ENCODE measurements at regions of chr3 and their contacts with region 1.

Region 1: DNA sequence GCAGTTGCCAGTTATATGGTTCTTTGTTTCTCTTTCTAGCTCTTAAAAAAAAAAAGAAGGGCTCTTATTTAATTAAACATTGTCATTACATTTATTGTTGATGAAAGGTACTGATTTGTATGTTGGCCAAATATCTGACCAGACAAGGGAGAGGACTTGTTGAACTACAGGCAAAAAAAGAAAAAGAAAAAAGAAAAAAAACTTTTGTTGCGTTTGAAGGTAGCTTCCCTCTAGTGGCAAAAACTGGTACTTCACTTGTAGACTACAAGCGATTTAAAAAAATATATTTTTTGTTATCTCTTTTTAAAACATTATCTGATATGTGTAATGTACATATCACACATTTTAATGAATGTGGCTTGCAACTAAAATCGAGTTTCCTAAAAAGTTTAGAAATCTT is 280.6 kb downstream of the ROBO2 start:
- DNase-seq: peak; percentile 33
- H3K4me3 ChIP-seq: no peak overlapping the region
- H3K27ac ChIP-seq: no peak overlapping the region
- H3K27me3 ChIP-seq: no peaks in the 10 kb centered on the region
- CTCF ChIP-seq: peak; percentile 80

Region 2: DNA sequence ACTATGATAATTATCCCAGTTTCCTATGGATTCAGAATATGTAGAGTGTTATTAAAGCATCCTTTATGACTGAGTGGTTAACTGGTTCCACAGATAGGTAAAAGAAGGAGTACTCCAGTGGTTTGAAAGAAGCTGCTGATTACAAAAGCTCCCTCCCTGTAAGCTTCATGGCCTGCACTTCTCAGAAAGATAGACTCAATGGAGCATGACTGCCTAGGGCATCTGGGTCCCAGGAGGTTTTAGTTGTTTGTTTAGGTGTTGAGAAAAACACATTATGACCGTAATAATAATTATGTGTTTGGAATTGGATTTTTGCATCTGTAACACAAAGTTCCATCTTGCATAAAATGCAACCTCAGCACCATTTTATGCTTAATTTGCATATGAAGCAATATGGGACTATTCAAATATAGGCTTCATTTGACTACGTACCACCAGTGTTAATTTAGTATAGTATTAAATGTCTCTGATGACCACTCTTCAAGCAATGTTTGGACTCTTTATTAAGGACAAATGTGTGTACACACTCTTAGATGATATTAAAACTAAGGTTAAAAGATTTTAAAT is 159.5 kb before region 1 on chr3:
- CTCF ChIA-PET with region 1: no interaction called
- POLR2A ChIA-PET with region 1: no interaction called
- DNase-seq: no peak
- H3K4me3 ChIP-seq: no peak overlapping the region
- H3K27ac ChIP-seq: no peak overlapping the region
- H3K27me3 ChIP-seq: no peaks in the 10 kb centered on the region
- CTCF ChIP-seq: no peak

Region 3: GRCh38 chr3:77254967-77255831 is 65.3 kb before region 1 on chr3:
- CTCF ChIA-PET with region 1: interaction called, 13 read pairs
- POLR2A ChIA-PET with region 1: no interaction called
- DNase-seq: peak; percentile 37
- H3K4me3 ChIP-seq: no peak overlapping the region
- H3K27ac ChIP-seq: no peak overlapping the region
- H3K27me3 ChIP-seq: no peaks in the 10 kb centered on the region
- CTCF ChIP-seq: peak; percentile 74

Region 4: DNA sequence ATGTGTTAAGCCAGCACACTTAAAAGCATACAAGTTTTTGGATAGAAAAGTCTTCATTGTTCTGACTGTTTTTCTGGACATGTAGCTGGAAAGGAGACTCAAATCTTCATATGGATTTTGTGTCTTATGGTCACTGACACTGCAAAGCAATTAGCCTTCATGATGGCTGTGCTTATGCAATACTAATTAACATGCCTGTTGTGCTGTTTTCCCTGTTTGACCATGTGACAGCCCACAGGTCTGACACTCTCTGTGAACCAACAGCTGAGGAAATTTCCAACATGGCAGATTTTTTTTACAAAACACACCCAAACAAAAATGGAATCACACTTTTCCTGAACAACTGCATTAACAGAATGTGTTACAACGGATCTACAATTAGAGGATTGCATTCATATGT is 32.2 kb before region 1 on chr3:
- CTCF ChIA-PET with region 1: interaction called, 18 read pairs
- POLR2A ChIA-PET with region 1: no interaction called
- DNase-seq: no peak
- H3K4me3 ChIP-seq: no peak overlapping the region
- H3K27ac ChIP-seq: no peak overlapping the region
- H3K27me3 ChIP-seq: no peaks in the 10 kb centered on the region
- CTCF ChIP-seq: no peak

Region 5: DNA sequence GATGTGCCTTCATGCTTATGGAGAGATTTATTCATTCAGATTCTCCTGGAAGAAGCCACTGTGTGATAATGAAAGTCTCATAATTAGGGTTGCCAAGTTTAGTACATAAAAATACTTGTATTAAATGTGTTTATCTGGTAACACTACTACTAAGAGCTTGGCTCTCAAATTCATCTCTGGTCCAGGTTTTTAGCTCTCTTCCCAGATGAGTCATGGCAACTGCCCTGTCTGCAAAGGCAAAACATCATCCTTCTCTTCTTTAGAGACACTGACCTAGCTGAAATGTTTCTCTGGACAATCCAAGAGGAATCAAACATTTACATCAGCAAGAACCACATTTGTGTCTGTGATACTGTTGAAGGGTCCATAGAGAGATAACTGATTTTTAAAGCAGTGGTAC is 11.1 kb before region 1 on chr3:
- CTCF ChIA-PET with region 1: interaction called, 54 read pairs
- POLR2A ChIA-PET with region 1: no interaction called
- DNase-seq: no peak
- H3K4me3 ChIP-seq: no peak overlapping the region
- H3K27ac ChIP-seq: no peak overlapping the region
- H3K27me3 ChIP-seq: no peaks in the 10 kb centered on the region
- CTCF ChIP-seq: no peak

Region 6: GRCh38 chr3:77563012-77563411 is 242.5 kb after region 1 on chr3:
- CTCF ChIA-PET with region 1: no interaction called
- POLR2A ChIA-PET with region 1: no interaction called
- DNase-seq: no peak
- H3K4me3 ChIP-seq: no peak overlapping the region
- H3K27ac ChIP-seq: no peak overlapping the region
- H3K27me3 ChIP-seq: no peaks in the 10 kb centered on the region
- CTCF ChIP-seq: no peak

Measured in AG04450 (cell line).